A549 (cell line): ENCODE measurements at regions of chr10 and their contacts with region 1.

Region 1: DNA sequence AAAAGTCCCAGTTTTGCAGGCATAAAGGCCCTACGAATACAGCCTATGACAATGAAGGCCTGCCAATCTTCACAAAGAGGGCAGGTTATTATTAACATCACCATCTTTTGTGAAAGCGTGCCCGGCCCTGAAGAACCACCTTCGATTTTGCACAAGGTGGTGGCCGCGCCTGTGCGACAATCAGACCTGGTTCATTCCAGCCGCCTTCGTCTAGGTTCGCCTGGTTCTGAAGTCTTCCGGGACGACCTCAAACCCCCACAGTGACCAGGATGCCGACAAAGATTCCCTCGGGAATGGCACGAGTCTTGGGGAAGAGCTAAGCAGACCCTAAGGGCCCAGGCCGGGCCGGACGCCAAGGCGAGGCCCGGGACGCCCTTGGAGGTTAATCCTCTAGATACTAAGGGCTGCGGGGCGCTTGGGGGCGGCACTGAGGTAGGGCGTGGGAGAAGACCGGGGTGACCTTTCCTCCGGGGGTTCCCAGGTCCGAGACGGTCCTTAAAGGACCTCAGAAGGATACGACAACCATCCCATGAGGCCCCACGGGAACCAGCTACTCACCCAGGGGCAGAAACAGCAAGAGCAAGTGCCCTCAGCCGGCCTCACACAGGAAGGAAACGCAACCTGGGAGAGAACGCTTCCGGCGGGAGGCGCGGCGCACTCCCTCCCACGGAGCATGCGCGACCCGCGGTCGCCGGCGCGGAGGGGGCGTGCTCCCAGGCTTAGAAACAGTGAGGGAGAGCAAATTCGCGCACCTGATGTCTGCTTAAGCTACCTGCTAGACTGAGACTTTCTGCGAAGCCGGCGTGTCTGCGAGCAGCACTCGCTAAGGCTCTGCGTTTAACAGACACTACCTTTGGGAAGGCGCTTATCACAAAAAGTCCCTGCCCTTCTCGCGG is at the start of gene ATAD1:
- DNase-seq: peak; percentile 76 to 93
- ATAC-seq: peak; percentile 95 to 96
- H3K4me3 ChIP-seq: peak within 1 kb of the TSS; percentile 70
- H3K27ac ChIP-seq: peak within 1 kb of the TSS; percentile 85 to 95
- H3K4me1 ChIP-seq: peaks cover 35% of the 10 kb centered on the region
- CTCF ChIP-seq: no peak
- EP300 ChIP-seq: no peak
- POLR2A ChIP-seq: peak; percentile 63
- RAD21 ChIP-seq: peak in 1 of 2 experiments; percentile 12; a peak in 1 of 5 replicates
- polyA plus RNA-seq, gene ATAD1: 66.7 and 94.8 TPM in 2 replicates

Region 2: GRCh38 chr10:87030899-87031635 is 786.8 kb before region 1 on chr10:
- CTCF ChIA-PET with region 1: no interaction called
- POLR2A ChIA-PET with region 1: no interaction called
- DNase-seq: no peak
- ATAC-seq: no peak
- H3K4me3 ChIP-seq: no peak overlapping the region
- H3K27ac ChIP-seq: no peak overlapping the region
- H3K4me1 ChIP-seq: peaks cover 4% of the 10 kb centered on the region; the same call in 2 of the 3 replicates
- CTCF ChIP-seq: no peak
- EP300 ChIP-seq: no peak
- POLR2A ChIP-seq: no peak
- RAD21 ChIP-seq: no peak

Region 3: DNA sequence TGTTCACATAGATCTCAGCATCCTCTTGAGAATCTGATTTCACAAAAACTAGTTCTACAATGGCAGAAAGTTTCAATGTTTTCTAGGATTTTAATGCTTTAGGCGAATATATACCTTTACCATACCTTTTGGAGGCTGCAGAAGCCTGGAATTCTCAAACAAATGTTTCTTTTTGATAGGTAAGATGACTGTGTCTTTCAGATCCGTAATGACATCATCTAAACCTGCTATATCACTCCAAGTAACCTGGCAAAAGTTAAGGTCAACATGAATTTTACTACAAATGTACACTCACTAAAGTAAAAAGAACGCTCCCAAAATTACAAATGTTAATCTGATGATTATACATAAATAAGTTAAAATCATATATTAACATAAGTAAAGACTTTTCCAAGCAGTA is 27.7 kb before region 1 on chr10:
- CTCF ChIA-PET with region 1: no interaction called
- POLR2A ChIA-PET with region 1: no interaction called
- DNase-seq: no peak
- ATAC-seq: no peak
- H3K4me3 ChIP-seq: no peak overlapping the region
- H3K27ac ChIP-seq: no peak overlapping the region
- H3K4me1 ChIP-seq: peaks cover 5% of the 10 kb centered on the region; the same call in 1 of the 3 replicates
- CTCF ChIP-seq: no peak
- EP300 ChIP-seq: no peak
- POLR2A ChIP-seq: no peak
- RAD21 ChIP-seq: no peak

Region 4: GRCh38 chr10:87837445-87837844 is 19.6 kb after region 1 on chr10:
- CTCF ChIA-PET with region 1: interaction called, 17 read pairs
- POLR2A ChIA-PET with region 1: interaction called, 4 read pairs
- DNase-seq: no peak
- ATAC-seq: no peak
- H3K4me3 ChIP-seq: no peak overlapping the region
- H3K27ac ChIP-seq: no peak overlapping the region
- H3K4me1 ChIP-seq: peaks cover 23% of the 10 kb centered on the region
- CTCF ChIP-seq: no peak
- EP300 ChIP-seq: no peak
- POLR2A ChIP-seq: no peak
- RAD21 ChIP-seq: no peak

Region 5: DNA sequence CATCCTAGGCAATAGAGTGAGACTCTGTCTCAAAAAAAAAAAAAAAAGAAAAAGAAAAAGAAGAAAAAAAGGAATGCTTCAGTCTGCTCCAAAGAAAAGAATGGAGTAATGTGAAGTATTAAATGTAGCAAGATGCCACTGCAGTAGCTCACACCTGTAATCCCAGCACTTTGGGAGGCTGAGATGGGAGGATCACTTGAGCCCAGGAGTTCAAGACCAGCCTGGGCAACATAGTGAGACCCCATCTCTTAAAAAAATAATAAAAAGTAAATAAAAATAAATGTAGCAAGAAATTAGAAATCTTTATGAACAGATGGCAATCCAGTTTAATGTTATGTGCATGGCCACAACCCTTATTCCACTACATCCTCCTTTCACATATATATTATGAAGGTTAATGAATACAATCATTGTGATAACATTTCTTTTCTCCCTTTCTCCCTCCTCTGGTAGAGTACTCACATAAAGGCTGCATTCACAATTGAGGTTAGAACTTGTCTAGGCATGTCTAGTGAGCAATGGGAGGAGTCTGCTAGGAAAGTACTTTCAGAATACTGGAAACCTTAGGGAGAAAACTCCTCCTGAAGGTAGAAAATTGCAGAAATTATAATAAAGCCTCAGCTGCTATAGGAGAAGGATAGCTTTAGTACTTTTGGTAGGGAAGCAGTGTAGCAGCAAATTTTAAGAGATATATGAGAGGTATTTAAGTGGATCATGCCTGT is 25.1 kb after region 1 on chr10:
- CTCF ChIA-PET with region 1: interaction called, 17 read pairs
- POLR2A ChIA-PET with region 1: interaction called, 24 read pairs
- DNase-seq: peak in 1 of 2 experiments; percentile 60
- ATAC-seq: no peak
- H3K4me3 ChIP-seq: no peak overlapping the region
- H3K27ac ChIP-seq: peak overlapping the region; percentile 73 to 78
- H3K4me1 ChIP-seq: peaks cover 63% of the 10 kb centered on the region
- CTCF ChIP-seq: no peak
- EP300 ChIP-seq: no peak
- POLR2A ChIP-seq: no peak
- RAD21 ChIP-seq: no peak

Region 6: DNA sequence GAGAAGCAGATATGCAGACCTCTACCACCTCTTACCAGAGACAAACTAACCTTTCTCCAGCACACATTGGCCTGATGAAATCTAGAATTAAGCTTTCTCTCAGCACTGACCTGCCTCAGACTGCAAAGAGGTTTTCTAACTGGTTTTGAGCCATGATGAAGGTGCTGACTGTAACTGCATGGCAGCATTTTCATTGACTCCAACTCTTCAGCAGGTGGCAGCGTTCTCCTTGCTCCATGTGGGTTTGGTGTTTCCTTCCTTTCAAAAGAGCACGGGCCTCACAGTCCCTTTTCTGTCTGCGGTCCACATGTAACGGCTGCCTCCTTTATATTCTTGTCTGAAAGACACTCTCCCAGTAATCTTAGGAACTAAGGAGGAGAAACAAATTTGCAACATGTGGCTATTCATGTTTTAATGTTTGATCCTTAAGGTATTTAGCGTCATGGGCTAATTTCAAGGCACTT is 32.9 kb after region 1 on chr10:
- CTCF ChIA-PET with region 1: interaction called, 18 read pairs
- POLR2A ChIA-PET with region 1: interaction called, 24 read pairs
- DNase-seq: peak; percentile 63 to 83
- ATAC-seq: peak; percentile 89 to 92
- H3K4me3 ChIP-seq: no peak overlapping the region
- H3K27ac ChIP-seq: peak overlapping the region in 1 of 2 experiments; percentile 58; a peak in 3 of 6 replicates
- H3K4me1 ChIP-seq: peaks cover 29% of the 10 kb centered on the region
- CTCF ChIP-seq: peak; percentile 64
- EP300 ChIP-seq: no peak
- POLR2A ChIP-seq: no peak
- RAD21 ChIP-seq: peak; percentile 82 to 87